T-cell (primary cell): ENCODE measurements at regions of chr5 and their contacts with region 1.

Region 1: GRCh38 chr5:132490486-132491367 is at the start of gene IRF1:
- DNase-seq: peak; percentile 93 to 99 (median 98)
- ATAC-seq: peak; percentile 79 to 86 (median 82)
- H3K4me3 ChIP-seq: peak within 1 kb of the TSS; percentile 78 to 90
- H3K4me3 Mint-ChIP-seq: peak within 1 kb of the TSS; percentile 95 to 96 (median 96)
- H3K27ac ChIP-seq: peak within 1 kb of the TSS; percentile 98
- H3K27ac Mint-ChIP-seq: peak within 1 kb of the TSS; percentile 97 to 99
- H3K4me1 ChIP-seq: peaks cover 59 to 67% of the 10 kb centered on the region in 2 experiments
- H3K4me1 Mint-ChIP-seq: peaks cover 68 to 85% (median 76%) of the 10 kb centered on the region in 3 donors
- H3K27me3 ChIP-seq: no peaks in the 10 kb centered on the region
- H3K27me3 Mint-ChIP-seq: no peaks in the 10 kb centered on the region
- total RNA-seq, gene IRF1: 167 to 859 (median 252) TPM

Region 2: DNA sequence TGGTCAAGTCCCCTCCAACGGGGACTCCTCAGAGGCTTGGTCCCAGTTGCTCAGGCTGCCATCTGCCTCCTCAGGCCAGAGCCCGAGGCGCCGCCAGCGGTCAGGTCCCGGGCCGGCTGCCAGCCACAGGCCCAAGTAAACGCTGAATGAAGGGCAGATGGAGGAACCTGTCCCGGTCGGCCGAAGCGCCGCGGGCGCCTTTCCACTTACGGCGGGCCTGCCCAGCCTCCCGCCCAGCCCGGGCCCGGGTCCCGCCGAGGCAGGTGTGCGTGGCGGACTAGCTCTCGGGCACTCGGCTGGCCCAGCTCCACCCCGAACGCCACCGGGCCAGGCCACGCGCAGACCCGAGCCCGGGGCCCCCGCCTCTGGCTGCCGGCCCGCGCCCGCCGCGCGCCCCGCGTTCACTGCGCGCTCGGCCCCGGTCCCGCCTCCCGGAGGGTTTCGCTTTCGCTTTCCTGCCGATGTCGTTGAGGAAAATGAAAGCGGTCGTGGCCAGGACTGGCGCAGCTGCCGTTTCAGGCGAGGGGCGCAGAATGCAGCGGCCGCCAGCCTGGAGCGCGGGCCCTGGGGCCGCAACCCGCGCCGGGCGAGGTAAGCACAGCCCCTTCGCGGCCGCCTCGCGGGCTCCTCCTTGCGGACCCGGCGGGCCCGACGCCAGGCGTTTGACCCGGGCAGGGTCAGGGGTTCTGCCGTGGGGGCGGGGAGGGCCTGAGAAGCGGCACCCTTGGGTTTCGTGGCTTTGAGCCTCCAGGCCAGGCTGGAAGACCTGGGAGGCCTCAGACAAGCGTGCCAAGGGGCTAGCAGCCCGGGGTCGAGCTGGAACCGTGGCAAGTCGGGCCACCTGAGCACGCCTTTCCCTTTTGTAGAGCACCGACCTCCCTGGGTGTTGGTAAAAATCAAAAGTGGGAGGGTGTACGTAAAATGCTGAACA is 80.0 kb before region 1 on chr5:
- CTCF ChIA-PET with region 1: interaction called in 1 of 2 experiments, 9 read pairs
- POLR2A ChIA-PET with region 1: interaction called, 6 to 14 read pairs
- DNase-seq: peak; percentile 67 to 93 (median 79)
- ATAC-seq: peak; percentile 70 to 77 (median 74)
- H3K4me3 ChIP-seq: peak overlapping the region; percentile 87 to 94
- H3K4me3 Mint-ChIP-seq: peak overlapping the region; percentile 98 to 99 (median 98)
- H3K27ac ChIP-seq: peak overlapping the region; percentile 98
- H3K27ac Mint-ChIP-seq: peak overlapping the region; percentile 99
- H3K4me1 ChIP-seq: peaks cover 19 to 52% of the 10 kb centered on the region in 2 experiments
- H3K4me1 Mint-ChIP-seq: peaks cover 73 to 85% (median 84%) of the 10 kb centered on the region in 3 donors
- H3K27me3 ChIP-seq: no peaks in the 10 kb centered on the region
- H3K27me3 Mint-ChIP-seq: no peaks in the 10 kb centered on the region

Region 3: GRCh38 chr5:132426525-132427138 is 64.1 kb before region 1 on chr5:
- CTCF ChIA-PET with region 1: interaction called, 4 to 9 read pairs
- POLR2A ChIA-PET with region 1: interaction called, 3 to 56 read pairs
- DNase-seq: peak; percentile 15 to 72 (median 44)
- ATAC-seq: peak; percentile 24 to 49 (median 38)
- H3K4me3 ChIP-seq: peak overlapping the region; percentile 2 to 17
- H3K4me3 Mint-ChIP-seq: peak overlapping the region; percentile 64 to 77 (median 68)
- H3K27ac ChIP-seq: peak overlapping the region; percentile 94
- H3K27ac Mint-ChIP-seq: peak overlapping the region; percentile 98 to 100
- H3K4me1 ChIP-seq: peaks cover 61 to 97% of the 10 kb centered on the region in 2 experiments
- H3K4me1 Mint-ChIP-seq: peaks cover 94 to 99% (median 98%) of the 10 kb centered on the region in 3 donors
- H3K27me3 ChIP-seq: no peaks in the 10 kb centered on the region
- H3K27me3 Mint-ChIP-seq: no peaks in the 10 kb centered on the region

Region 4: DNA sequence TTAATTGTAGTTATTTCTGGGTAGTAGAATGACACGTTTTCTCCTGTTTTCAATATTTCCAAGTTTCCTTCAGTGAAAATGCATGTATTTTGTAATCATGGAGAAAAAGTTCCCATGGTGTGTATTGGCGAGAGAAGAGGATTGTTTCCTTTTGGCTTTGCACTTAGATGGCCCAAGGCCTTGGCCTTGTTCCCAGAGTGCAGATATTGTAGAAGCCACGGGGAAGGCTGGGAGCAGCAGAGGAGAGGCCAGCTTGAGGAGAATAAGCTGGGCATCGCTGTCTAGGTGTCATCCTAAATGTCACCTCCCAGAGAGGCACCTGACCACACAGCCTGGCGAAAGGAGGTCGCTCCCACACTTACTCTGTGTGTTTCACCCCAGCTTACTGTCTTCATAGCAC is 44.1 kb before region 1 on chr5:
- CTCF ChIA-PET with region 1: no interaction called
- POLR2A ChIA-PET with region 1: interaction called in 1 of 2 experiments, 19 read pairs
- DNase-seq: no peak
- ATAC-seq: peak in 1 of 4 experiments; percentile 23
- H3K4me3 ChIP-seq: peak overlapping the region in 1 of 2 donors; percentile 9
- H3K4me3 Mint-ChIP-seq: peak overlapping the region in 2 of 3 donors; percentile 36 to 64
- H3K27ac ChIP-seq: peak overlapping the region; percentile 45
- H3K27ac Mint-ChIP-seq: peak overlapping the region; percentile 77 to 87
- H3K4me1 ChIP-seq: peaks cover 11 to 77% of the 10 kb centered on the region in 2 experiments
- H3K4me1 Mint-ChIP-seq: peaks cover 83 to 90% (median 85%) of the 10 kb centered on the region in 3 donors
- H3K27me3 ChIP-seq: no peaks in the 10 kb centered on the region
- H3K27me3 Mint-ChIP-seq: no peaks in the 10 kb centered on the region

Region 5: DNA sequence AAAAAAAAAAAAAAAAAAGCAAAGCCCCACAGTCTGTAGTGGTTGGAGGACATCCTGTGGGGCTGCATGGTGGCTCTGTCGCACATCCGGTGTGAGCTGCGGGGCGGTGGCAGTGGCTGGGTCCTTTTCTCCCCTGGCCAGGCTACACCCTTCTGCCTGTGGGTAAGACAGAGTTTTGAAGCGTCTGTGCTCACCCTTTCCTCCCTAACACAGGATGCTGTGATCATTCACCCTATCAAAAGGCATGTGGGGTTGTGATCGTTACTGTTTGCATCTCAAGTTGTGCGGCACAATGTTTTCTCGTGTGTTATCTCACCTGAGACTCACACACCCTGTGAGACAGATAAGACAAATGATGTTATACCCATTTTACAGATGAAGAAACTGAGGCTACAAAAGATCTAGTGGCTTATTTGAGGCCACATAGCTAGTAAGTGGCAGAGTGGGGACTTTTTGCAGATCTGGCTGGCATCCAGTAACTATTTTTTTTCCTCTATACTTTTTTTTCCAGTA is 17.7 kb before region 1 on chr5:
- CTCF ChIA-PET with region 1: interaction called in 1 of 2 experiments, 4 read pairs
- POLR2A ChIA-PET with region 1: interaction called, 60 to 133 read pairs
- DNase-seq: peak; percentile 55 to 94 (median 89)
- ATAC-seq: peak; percentile 68 to 91 (median 86)
- H3K4me3 ChIP-seq: no peak overlapping the region
- H3K4me3 Mint-ChIP-seq: peak overlapping the region; percentile 41 to 46 (median 43)
- H3K27ac ChIP-seq: peak overlapping the region; percentile 85
- H3K27ac Mint-ChIP-seq: peak overlapping the region; percentile 93 to 97
- H3K4me1 ChIP-seq: peaks cover 28 to 98% of the 10 kb centered on the region in 2 experiments
- H3K4me1 Mint-ChIP-seq: peaks cover 85 to 93% (median 90%) of the 10 kb centered on the region in 3 donors
- H3K27me3 ChIP-seq: no peaks in the 10 kb centered on the region
- H3K27me3 Mint-ChIP-seq: no peaks in the 10 kb centered on the region